Head of caudate nucleus (tissue), 42 donors: ENCODE measurements at regions of chr17 and their contacts with region 1.

Region 1: DNA sequence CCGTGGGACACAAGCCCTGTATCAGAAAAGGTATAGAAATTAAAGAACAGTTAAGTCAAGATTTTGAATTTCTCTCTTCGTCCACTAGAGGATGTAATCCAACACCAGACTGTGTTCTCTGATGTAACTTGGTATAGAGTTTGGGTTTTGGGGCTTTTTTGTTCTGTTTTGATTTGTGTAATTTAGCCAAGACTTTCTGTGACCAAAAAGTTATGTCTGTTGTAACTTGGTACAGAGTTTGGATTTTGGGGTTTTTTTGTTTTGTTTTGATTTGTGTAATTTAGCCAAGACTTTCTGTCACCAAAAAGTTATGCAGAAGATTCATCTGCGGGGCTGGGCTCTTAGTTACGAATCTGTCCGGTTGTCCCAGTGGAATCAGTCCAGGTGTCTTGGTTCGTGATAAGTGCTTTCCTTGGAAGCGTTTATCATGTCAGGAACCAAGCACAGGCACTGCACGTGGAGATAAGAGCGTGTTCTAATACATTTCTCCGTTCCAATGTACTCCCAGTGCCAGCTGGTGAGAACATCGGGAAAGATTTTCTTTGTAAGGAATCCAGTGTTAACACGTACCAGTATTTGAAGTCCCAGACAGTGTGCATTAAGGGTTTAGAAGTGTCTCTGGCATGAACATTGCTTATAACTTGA is 44.1 kb upstream of the SEC14L1 start:
- DNase-seq: peak in 1 of 42 donors; percentile 37

Region 2: GRCh38 chr17:76997981-76998531 is 98.6 kb before region 1 on chr17:
- intact Hi-C with region 1: no loop called
- DNase-seq: no peak

Region 3: GRCh38 chr17:77140166-77140878 is 43.6 kb after region 1 on chr17:
- intact Hi-C with region 1: loop called (anchors 5 kb)
- DNase-seq: peak; percentile 96 to 100 (median 99)

Region 4: DNA sequence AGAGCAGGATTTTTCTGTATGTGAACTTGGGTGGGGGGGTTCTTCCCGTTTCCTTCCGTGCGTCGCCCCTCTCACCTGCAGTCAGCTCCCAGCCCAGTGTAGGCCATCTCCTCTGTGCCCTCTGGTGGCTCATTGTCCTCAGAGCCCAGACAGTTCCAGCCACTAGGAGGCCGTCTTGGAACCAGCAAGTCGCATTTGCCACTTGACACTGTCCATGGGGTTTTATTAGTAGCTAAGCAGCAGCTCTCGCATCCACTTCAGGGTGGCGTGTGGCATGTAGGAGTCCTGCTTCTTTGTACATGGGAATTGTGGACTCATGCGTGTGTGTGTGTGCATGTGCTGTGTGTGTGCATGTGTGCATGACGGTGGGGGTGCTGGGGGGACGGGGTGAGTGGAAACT is 118.1 kb after region 1 on chr17:
- intact Hi-C with region 1: loop called (anchors 10 kb)
- DNase-seq: peak in 35 of 42 donors; percentile 32 to 82 (median 63)